Natural killer cell (primary cell): ENCODE measurements at regions of chr3 and their contacts with region 1.

Region 1: DNA sequence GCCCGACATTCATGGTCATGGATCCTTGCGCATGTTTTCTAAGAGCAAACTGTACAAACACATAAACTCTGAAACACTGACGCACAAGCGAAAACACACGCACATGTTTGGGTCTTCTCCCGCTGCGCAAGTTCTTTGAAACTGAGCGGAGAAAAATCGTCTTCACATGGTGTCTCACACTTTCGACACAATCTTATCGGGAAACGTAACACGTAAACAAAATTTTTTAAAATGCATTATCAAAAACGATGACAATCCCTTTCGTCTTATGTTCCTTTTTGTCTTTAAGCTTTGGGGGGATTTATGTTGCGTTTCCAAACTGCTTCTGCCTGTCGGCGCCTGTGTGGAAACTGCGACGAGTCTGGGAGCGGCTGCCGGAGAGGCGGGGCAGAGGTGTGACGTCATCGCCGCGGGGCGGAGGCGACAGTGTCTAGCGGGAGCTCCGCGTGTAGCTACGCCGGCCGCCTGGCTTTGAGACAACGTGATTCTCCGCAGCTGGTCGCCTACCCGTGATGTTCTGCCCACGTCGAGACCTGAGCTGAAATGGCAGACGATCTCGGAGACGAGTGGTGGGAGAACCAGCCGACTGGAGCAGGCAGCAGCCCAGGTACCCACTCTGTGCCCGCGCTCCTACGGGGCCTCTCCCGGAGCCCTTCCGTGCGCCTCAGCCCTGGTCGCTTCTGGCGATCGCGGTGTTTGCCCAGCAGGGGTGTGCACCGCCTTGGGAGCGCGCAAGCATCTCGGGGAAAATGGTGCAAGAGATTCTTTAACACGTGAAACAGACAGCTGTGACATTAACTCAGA is at the start of gene CMSS1:
- DNase-seq: peak; percentile 96 to 97
- ATAC-seq: peak; percentile 94 to 96 (median 94)
- H3K4me3 ChIP-seq: peak within 1 kb of the TSS; percentile 58
- H3K4me3 Mint-ChIP-seq: peak within 1 kb of the TSS; percentile 98
- H3K27ac ChIP-seq: peak within 1 kb of the TSS; percentile 82
- H3K27ac Mint-ChIP-seq: peak within 1 kb of the TSS; percentile 99
- H3K4me1 ChIP-seq: peaks cover 5% of the 10 kb centered on the region
- H3K4me1 Mint-ChIP-seq: peaks cover 25 to 27% of the 10 kb centered on the region in 2 donors
- H3K27me3 ChIP-seq: no peaks in the 10 kb centered on the region
- H3K27me3 Mint-ChIP-seq: peaks cover 0 to 6% of the 10 kb centered on the region in 2 donors
- CTCF ChIP-seq: no peak
- total RNA-seq, gene CMSS1: 7.8 to 12.7 (median 9.2) TPM

Region 2: GRCh38 chr3:98901392-98902350 is 916.0 kb before region 1 on chr3 and contains the start of gene DCBLD2:
- intact Hi-C with region 1: loop called (anchors 10 kb)
- DNase-seq: peak; percentile 91 to 95
- ATAC-seq: peak; percentile 95 to 99 (median 98)
- H3K4me3 ChIP-seq: peak within 1 kb of the TSS; percentile 67
- H3K4me3 Mint-ChIP-seq: peak within 1 kb of the TSS; percentile 97
- H3K27ac ChIP-seq: no peak within 1 kb of the TSS
- H3K27ac Mint-ChIP-seq: peak within 1 kb of the TSS; percentile 0 to 88
- H3K4me1 ChIP-seq: peaks cover 11% of the 10 kb centered on the region
- H3K4me1 Mint-ChIP-seq: peaks cover 9 to 20% of the 10 kb centered on the region in 2 donors
- H3K27me3 ChIP-seq: peaks cover 6% of the 10 kb centered on the region
- H3K27me3 Mint-ChIP-seq: peaks cover 3 to 6% of the 10 kb centered on the region in 2 donors
- CTCF ChIP-seq: no peak
- total RNA-seq, gene DCBLD2: 0.66 to 0.99 (median 0.90) TPM

Region 3: GRCh38 chr3:99731499-99731898 is 86.1 kb before region 1 on chr3:
- intact Hi-C with region 1: no loop called
- DNase-seq: no peak
- ATAC-seq: no peak
- H3K4me3 ChIP-seq: no peak overlapping the region
- H3K4me3 Mint-ChIP-seq: no peak overlapping the region
- H3K27ac ChIP-seq: no peak overlapping the region
- H3K27ac Mint-ChIP-seq: no peak overlapping the region
- H3K4me1 ChIP-seq: no peaks in the 10 kb centered on the region
- H3K4me1 Mint-ChIP-seq: no peaks in the 10 kb centered on the region
- H3K27me3 ChIP-seq: no peaks in the 10 kb centered on the region
- H3K27me3 Mint-ChIP-seq: no peaks in the 10 kb centered on the region
- CTCF ChIP-seq: no peak

Region 4: DNA sequence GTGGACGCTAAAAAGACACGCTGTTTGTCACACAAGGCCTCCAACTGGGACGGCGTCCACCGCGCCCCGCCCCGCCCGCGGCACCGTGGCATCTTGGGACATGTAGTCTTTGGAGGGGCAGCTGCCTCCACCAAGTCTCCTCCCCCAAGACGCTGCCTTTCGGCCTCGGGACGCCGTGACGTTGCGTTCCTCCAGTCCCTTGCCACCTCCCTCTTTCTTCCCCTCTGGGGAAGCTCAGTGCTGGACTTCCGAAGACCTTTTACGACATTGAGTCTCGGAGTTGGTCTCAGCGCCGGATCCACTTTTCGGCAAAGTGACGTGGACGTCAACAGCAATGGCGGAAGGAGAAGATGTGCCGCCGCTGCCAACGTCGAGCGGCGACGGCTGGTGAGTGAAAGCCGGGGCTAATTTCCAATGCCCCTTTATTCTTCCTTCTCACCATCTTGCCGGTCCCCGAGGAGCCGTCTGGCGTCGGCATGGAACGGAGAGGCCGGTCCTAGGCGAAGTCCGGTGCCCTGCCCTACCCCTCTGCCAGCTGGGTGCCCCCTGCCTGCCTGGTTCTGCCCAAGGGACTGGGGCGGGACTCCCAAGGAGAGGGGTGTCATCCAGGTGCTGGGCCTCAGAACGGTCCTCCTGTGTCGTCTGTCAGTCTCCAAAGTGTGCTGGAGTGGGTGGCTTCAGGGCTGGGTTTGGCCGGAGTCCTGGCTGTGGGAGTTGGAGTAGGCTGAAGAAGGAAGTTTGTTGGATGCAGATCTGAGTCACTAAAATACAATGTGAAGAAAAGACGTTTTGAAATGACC is 443.2 kb after region 1 on chr3 and contains the start of gene TBC1D23:
- intact Hi-C with region 1: loop called (anchors 1 kb)
- DNase-seq: peak; percentile 94 to 99
- ATAC-seq: peak; percentile 98 to 100 (median 99)
- H3K4me3 ChIP-seq: peak within 1 kb of the TSS; percentile 80
- H3K4me3 Mint-ChIP-seq: peak within 1 kb of the TSS; percentile 94
- H3K27ac ChIP-seq: peak within 1 kb of the TSS; percentile 93
- H3K27ac Mint-ChIP-seq: peak within 1 kb of the TSS; percentile 95 to 96
- H3K4me1 ChIP-seq: peaks cover 18% of the 10 kb centered on the region
- H3K4me1 Mint-ChIP-seq: peaks cover 39 to 48% of the 10 kb centered on the region in 2 donors
- H3K27me3 ChIP-seq: no peaks in the 10 kb centered on the region
- H3K27me3 Mint-ChIP-seq: no peaks in the 10 kb centered on the region
- CTCF ChIP-seq: no peak
- total RNA-seq, gene TBC1D23: 38.8 to 50.3 (median 45.4) TPM

Region 5: GRCh38 chr3:100548053-100548452 is 730.4 kb after region 1 on chr3:
- intact Hi-C with region 1: no loop called
- DNase-seq: no peak
- ATAC-seq: no peak
- H3K4me3 ChIP-seq: no peak overlapping the region
- H3K4me3 Mint-ChIP-seq: no peak overlapping the region
- H3K27ac ChIP-seq: no peak overlapping the region
- H3K27ac Mint-ChIP-seq: no peak overlapping the region
- H3K4me1 ChIP-seq: no peaks in the 10 kb centered on the region
- H3K4me1 Mint-ChIP-seq: no peaks in the 10 kb centered on the region
- H3K27me3 ChIP-seq: no peaks in the 10 kb centered on the region
- H3K27me3 Mint-ChIP-seq: peaks cover 10 to 30% of the 10 kb centered on the region in 2 donors
- CTCF ChIP-seq: no peak